HEK293T (cell line): ENCODE measurements at regions of chr2 and their contacts with region 1.

Region 1: DNA sequence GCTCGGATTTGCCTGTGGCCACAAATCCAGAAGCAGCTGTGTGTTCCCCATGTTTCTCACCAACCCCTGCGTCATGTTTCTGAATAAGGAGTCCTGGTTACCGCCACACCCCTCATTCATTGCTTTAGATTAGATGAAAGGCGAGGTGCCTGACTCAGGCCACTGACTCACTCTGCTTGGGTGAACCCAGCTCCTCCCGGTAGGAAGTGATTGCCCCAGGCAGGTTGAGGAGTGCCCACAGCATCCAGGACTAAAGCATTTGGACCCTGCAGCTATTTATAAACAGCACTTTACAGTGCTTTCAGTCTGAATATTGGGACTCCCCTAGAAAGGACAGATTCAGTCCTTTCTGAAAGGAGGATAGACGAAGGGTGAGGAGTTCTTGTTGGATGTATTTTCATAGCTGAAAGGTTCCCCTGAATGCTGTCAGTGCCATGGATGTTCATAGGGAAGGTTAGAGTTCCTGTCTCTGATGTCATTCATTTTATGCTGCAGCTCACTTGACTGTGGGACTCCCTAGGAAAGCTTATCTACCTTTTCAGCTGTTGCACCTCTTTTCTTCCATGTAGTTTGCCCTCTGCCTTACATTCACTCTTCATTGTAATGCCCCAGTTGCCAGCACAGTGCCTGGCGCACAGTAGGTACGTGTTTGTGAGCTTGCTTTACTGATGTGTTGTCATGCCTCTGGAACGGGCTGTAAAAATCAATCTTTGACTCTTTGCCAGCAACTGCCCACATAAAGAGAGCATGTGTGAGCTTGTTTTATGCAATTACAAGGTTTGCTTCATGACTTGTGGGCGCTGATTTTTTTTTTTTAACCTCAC is 14.9 kb downstream of the ITGA6 start:
- DNase-seq: peak; percentile 12

Region 2: GRCh38 chr2:172307800-172308199 is 134.5 kb before region 1 on chr2:
- CTCF ChIA-PET with region 1: no interaction called
- POLR2A ChIA-PET with region 1: no interaction called
- DNase-seq: no peak

Region 3: GRCh38 chr2:172416447-172417058 is 25.7 kb before region 1 on chr2:
- CTCF ChIA-PET with region 1: no interaction called
- POLR2A ChIA-PET with region 1: no interaction called
- DNase-seq: no peak

Region 4: DNA sequence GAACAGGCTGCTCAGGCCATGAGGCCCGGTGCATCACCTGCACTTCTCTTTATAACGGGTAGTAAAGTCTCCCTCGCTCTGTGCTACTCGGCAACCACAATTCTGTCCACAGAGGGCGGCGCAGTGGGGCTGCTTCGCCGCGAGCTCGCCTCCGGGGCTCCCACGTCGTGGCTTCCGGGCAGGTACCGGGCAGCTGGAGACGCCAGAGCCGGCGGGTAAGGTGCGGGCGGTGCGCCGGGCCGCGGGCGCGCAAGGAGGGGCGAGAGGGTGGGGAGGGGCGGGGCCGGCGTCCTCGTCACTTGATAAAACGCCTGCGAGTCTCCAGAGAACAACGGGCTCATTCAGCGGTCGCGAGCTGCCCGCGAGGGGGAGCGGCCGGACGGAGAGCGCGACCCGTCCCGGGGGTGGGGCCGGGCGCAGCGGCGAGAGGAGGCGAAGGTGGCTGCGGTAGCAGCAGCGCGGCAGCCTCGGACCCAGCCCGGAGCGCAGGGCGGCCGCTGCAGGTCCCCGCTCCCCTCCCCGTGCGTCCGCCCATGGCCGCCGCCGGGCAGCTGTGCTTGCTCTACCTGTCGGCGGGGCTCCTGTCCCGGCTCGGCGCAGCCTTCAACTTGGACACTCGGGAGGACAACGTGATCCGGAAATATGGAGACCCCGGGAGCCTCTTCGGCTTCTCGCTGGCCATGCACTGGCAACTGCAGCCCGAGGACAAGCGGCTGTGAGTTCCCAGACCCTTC is 14.9 kb before region 1 on chr2 and contains the start of gene ITGA6:
- CTCF ChIA-PET with region 1: no interaction called
- POLR2A ChIA-PET with region 1: interaction called, 17 read pairs
- DNase-seq: peak; percentile 76

Region 5: DNA sequence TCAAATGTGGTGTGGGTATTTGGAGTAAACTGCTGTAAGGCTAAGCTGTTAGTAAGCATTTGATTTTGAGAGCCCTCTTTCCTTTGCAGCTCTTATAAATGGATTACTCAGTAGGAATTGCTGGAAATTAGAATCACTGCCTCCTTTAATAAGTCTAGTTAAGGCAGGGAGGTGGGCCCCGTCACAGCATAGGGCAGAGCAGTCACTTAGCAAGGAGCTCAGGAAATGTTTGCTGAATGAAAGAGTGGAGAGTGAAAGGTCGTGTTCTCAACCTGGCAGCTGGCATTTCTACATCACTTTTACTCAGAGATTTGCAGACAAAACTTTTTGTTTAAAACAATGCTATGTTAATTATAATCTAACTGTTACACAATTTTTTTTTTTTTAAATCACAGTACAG is 10.6 kb after region 1 on chr2:
- CTCF ChIA-PET with region 1: interaction called, 12 read pairs
- POLR2A ChIA-PET with region 1: no interaction called
- DNase-seq: no peak

Region 6: GRCh38 chr2:172513935-172514586 is 71.8 kb after region 1 on chr2:
- CTCF ChIA-PET with region 1: no interaction called
- POLR2A ChIA-PET with region 1: no interaction called
- DNase-seq: no peak